Psoas muscle (tissue), 8 donors: ENCODE measurements at regions of chr1 and their contacts with region 1.

Region 1: GRCh38 chr1:35715568-35716002 is 3.1 kb downstream of the C1orf216 start:
- DNase-seq: peak; percentile 70 to 83
- ATAC-seq: peak; percentile 35 to 57 (median 52)
- H3K4me3 ChIP-seq: peak overlapping the region; percentile 20
- H3K27ac ChIP-seq: no peak overlapping the region
- H3K4me1 ChIP-seq: peaks cover 25% of the 10 kb centered on the region
- H3K27me3 ChIP-seq: no peaks in the 10 kb centered on the region
- CTCF ChIP-seq: peak; percentile 74

Region 2: DNA sequence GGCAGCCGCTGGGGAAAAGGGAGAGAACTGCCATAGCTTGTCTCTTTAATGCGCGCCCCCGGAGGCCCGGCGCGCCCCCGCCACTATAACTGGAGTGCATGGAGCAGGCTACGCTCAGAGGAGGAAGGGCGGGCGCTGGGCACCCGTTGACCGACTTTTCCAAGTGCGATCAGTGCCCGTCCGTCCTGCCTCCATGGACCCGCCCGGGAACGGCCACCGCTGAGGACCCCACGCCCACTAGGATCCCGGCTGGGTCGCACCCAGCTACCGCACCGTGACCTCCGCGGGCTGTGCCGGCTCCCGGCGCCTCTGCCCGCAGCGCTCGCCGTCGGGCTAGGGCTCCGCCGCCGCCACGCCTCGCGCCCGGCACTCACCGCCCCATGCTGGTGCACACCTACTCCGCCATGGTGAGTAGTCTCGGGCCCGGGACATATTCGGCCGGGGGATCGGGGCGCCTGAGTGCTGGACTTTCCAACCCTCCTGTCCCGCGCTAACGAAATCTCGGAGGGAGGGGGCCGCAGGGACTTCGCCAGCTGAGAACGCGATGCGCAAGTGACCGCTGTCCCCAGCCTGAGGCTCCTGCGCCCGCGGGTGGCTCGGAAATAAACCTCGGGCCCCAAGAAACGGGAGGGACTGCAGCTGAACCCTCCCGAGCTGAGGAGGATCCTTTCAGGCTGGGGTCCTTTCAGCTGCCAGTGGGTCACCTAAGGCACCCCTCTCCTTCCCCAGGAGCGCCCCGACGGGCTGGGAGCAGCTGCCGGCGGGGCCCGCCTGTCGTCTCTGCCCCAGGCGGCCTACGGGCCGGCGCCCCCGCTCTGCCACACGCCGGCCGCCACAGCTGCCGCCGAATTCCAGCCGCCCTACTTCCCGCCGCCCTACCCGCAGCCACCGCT is 142.1 kb before region 1 on chr1 and contains the start of gene TFAP2E:
- intact Hi-C with region 1: loop called in 1 of 2 experiments (anchors 2 kb)
- DNase-seq: peak in 1 of 2 donors; percentile 36
- ATAC-seq: peak; percentile 21 to 43 (median 32)
- H3K4me3 ChIP-seq: peak within 1 kb of the TSS; percentile 60
- H3K27ac ChIP-seq: no peak within 1 kb of the TSS
- H3K4me1 ChIP-seq: peaks cover 11% of the 10 kb centered on the region
- H3K27me3 ChIP-seq: peaks cover 0 to 87% (median 36%) of the 10 kb centered on the region in 3 donors
- CTCF ChIP-seq: no peak
- total RNA-seq, gene TFAP2E: not detected

Region 3: DNA sequence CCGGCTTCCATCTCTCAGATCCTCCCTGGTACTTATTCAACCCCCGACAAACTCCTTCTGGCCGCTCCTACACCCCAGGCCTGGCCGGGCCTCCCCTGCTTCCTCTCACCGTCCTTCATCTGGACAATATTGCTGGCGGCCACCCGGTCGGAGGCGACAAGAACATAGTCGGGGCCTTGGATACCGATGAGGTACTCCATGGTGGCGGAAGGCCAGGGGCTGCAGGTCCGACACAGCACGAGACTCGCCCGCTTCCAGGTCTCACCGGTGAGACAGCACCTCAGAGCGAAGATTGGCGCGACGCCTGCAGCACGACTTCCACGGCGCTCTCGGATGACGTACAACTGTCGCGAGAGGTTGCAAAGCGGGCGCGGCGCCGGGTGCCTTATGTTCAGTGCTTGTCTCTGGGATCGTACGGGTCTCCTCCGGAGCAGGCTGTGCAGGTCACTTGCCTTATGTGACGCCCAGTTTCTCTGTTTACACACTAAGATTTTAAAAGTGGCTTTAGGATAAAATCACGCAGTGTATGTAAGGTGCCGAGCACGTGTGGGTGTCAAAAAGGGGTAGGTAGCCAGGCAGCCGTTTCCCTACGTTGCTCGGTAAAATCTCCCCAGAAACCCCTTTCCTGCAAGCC is 74.2 kb before region 1 on chr1 and contains the start of gene PSMB2:
- intact Hi-C with region 1: loop called (anchors 5 to 10 kb)
- DNase-seq: peak; percentile 96 to 98
- ATAC-seq: peak; percentile 95 to 97 (median 96)
- H3K4me3 ChIP-seq: peak within 1 kb of the TSS; percentile 96
- H3K27ac ChIP-seq: peak within 1 kb of the TSS; percentile 95
- H3K4me1 ChIP-seq: peaks cover 34% of the 10 kb centered on the region
- H3K27me3 ChIP-seq: peaks cover 0 to 10% (median 0%) of the 10 kb centered on the region in 3 donors
- CTCF ChIP-seq: no peak
- total RNA-seq, gene PSMB2: 38.6 to 95.1 (median 67.5) TPM